ENCODE measurements at regions of chr16 and their contacts with region 1.

Region 1: DNA sequence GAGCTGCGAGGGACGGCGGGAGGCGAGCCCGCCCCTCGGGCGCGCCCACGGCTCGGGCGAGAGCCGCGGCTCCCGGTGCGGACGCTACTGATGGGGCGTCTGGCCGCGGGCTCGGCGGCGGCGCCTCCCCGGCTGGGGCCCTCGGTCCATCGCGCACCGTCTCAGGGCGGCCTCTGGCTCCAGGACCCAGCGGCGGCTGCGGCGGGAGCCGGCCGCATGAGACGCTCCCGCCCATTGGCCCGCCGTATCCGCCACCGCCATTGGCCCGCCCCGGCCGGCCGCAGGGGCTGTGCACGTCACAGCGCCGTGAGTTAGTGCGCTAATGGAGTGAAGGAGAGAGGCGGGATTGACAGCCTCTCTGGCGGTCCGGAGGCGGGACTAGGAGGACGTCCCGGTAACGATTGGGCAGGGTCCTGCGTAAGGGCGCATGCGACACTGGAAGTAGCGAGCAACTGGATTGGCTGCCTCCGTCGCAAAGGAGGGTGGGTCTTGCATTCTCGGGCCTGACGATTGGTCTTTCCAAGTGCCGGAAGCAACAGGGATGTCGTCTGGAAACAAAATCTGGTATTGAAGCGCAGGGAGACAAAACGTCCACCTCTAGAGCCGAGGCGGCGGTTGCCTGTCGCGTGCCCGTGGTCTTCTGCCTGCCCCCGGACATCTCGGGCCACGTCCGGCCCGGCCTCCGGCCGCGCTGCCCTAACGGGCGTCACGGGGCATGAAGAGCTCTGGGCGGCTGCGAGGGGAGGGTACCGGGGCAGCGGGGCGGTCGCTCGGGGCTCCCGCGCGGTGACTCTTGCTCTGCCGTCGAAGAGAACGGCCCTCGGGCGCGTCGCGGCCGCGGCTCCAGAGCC is at the start of gene ANKRD11:
- DNase-seq: peak; percentile 92 to 100 (median 98)
- ATAC-seq: peak; percentile 82 to 86
- H3K4me3 Mint-ChIP-seq: peak within 1 kb of the TSS; percentile 92 to 97 (median 94)
- H3K27ac Mint-ChIP-seq: peak within 1 kb of the TSS; percentile 94 to 99 (median 97)
- H3K4me1 Mint-ChIP-seq: peaks cover 30 to 67% (median 63%) of the 10 kb centered on the region in 4 donors
- H3K27me3 Mint-ChIP-seq: no peaks in the 10 kb centered on the region
- polyA plus RNA-seq, gene ANKRD11: 8.9 to 61.1 (median 13.9) TPM

Region 2: DNA sequence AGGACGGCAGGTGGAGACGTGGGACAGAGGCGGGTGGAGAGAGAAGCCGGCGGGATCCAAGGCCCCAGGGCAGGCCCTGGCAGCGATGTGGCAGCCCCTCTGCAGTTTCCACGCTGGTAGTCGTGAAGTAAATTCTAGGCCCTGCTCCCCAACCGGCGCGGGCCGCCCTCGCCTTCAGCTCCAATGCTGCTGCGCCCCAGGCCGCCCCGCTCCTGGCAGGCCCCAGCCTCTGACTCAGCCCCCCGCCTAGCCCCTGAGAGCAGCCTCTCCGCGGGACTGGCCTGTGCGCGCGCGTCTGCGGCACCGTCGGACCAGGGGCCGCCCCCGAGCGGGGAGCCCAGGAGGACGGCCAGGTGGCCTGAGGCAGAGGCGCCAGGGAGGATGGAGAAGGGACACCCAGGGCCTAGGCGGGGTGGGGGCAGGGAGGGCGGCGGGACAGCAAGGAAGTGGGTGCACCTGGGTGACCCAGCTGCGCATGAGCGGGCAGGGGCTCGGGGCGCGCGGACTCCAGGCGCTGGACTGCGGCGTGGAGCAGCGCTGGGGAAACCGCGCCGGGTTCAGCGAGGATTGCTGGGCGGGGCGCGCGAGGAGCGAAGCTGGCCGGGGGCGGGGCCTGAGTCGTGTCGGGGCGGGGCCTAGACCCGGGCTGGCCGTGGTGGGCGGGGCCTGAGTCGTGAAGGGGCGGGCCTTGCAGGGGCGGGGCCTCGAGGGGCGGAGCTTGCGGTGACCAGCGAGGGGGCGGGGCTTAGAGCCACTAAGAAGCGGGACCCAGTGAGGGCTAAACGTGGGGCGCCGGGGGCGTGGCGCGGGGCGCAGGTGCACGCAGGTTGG is 243.5 kb before region 1 on chr16:
- POLR2A ChIA-PET with region 1: interaction called, 12 read pairs
- DNase-seq: peak; percentile 90 to 99 (median 95)
- ATAC-seq: peak; percentile 85 to 87
- H3K4me3 Mint-ChIP-seq: peak overlapping the region; percentile 67 to 86 (median 76)
- H3K27ac Mint-ChIP-seq: peak overlapping the region in 7 of 10 donors; percentile 51 to 85 (median 75)
- H3K4me1 Mint-ChIP-seq: peaks cover 5 to 33% (median 10%) of the 10 kb centered on the region in 4 donors
- H3K27me3 Mint-ChIP-seq: no peaks in the 10 kb centered on the region

Region 3: DNA sequence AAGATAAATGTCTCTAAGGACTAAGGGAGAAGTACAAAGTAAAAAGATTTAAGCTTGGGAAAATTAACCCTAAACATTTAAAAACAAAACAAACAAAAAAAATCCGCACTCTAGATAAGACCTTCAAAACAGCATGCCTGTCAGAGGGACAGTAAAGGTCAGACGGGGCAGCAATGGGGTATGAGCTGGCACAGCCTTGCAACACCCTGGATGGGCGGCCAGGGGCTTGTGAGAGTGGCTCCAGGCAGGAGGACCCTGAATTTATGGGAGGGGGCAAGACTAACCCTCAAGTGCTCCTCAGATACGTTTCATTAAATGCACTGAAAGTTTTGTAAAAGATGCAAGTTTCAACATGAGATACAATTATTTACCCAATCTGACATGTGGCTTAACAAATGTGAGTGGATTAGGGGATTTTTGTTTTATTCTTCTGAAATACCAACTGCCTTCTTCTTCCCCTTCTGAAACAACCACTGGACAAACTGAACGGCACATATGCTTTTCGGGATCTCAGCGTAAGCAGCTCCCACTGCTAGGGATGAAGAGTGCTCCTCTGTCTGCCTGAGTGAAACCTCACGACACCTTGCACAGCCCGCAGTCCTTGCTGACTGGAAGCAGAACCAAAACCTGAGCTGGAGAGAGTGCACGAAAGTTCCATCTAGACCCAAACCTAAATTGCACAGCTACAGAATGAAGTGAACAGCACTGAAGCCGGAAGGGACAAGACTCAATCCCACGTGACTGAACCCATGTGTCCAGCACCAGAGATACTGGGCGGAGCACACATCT is 128.7 kb before region 1 on chr16:
- POLR2A ChIA-PET with region 1: interaction called, 11 read pairs
- DNase-seq: no peak
- ATAC-seq: no peak
- H3K4me3 Mint-ChIP-seq: peak overlapping the region; percentile 17 to 91 (median 82)
- H3K27ac Mint-ChIP-seq: peak overlapping the region; percentile 81 to 97 (median 92)
- H3K4me1 Mint-ChIP-seq: peaks cover 55 to 98% (median 95%) of the 10 kb centered on the region in 4 donors
- H3K27me3 Mint-ChIP-seq: no peaks in the 10 kb centered on the region

Region 4: DNA sequence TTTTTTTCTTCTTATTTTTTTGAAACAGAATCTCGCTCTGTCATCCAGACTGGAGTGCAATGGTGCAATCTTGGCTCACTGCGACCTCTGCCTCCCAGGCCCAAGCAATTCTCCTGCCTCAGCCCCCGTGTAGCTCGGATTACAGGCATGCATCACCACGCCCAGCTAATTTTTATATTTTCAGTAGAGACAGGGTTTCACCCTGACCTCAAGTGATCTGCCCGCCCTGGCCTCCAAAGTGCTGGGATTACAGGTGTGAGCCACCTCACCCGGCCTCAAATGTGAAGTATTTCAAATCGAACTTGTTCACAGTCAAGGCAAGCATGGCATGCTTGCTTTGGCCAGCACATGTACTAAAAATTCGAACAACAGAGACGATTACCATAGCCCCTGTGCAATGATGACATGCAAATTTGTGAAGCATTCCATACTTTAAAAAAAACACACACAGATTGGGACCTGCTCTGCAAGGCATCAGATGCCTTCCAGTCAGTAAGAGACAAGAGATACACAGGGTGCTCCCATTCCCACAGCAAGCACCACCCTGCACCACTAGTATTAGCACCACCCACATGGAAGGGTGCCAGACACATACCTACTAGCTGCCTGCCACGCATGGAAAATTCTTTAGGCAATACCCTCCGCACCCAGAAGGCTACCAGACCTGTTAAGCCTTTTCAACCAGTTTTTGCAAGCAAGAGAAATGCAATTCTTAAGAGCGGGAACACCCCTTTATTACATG is 47.5 kb before region 1 on chr16:
- POLR2A ChIA-PET with region 1: interaction called, 21 read pairs
- DNase-seq: no peak
- ATAC-seq: peak; percentile 12 to 24
- H3K4me3 Mint-ChIP-seq: peak overlapping the region; percentile 56 to 85 (median 78)
- H3K27ac Mint-ChIP-seq: peak overlapping the region; percentile 14 to 94 (median 90)
- H3K4me1 Mint-ChIP-seq: peaks cover 63 to 95% (median 94%) of the 10 kb centered on the region in 4 donors
- H3K27me3 Mint-ChIP-seq: no peaks in the 10 kb centered on the region

Region 5: DNA sequence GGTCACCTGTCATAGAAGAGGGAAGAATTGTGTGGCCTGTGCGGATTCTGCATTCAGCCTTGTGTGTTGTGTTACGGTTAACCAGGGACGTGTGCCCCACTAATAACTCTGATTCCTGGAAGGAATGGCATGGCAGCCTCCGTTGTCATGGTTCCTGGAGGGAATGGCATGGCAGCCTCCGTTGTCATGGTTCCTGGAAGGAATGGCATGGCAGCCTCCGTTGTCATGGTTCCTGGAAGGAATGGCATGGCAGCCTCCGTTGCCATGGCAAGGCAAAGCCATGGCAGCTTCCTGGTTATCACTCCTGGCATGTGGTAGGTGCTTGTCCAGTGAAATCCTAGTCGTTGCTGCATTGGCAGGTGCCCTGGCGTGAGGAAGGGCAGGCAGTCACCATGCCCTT is 26.5 kb after region 1 on chr16:
- POLR2A ChIA-PET with region 1: no interaction called
- DNase-seq: no peak
- ATAC-seq: no peak
- H3K4me3 Mint-ChIP-seq: no peak overlapping the region
- H3K27ac Mint-ChIP-seq: no peak overlapping the region
- H3K4me1 Mint-ChIP-seq: peaks cover 0 to 18% (median 8%) of the 10 kb centered on the region in 4 donors
- H3K27me3 Mint-ChIP-seq: no peaks in the 10 kb centered on the region